ENCODE measurements at regions of chr19 and their contacts with region 1.

Region 1: DNA sequence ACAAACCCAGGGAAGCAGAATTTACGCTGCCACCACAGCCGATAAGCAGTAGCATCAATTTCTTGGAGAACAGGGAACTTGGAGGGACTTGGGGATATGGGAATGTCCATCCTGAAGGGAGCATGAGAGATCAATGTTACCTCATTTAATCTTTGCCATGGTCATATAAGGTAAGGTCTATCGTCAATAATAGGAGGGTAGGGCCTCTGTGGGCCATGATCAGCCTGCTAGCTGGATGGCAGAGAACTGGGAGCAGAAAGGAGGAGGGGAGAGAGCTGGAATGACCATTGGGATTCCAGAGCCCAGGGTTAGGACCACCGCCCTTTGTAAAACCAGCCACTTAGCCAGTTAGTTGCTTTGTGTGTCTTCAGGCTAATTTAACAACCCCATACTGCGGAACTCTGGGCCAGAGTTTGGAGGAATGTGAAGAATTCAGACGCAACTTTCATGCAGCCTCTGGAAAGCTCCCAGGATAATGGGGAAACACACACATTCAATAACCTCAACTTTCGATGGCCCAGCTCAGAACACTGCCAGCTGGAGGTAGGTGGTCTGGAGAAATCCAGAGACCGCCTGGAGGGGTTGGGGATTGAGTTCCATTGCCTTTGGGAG is 40.3 kb downstream of the ZNF557 start:
- DNase-seq: no peak
- ATAC-seq: no peak
- H3K4me3 ChIP-seq: no peak overlapping the region
- H3K27ac ChIP-seq: no peak overlapping the region
- H3K4me1 ChIP-seq: no peaks in the 10 kb centered on the region
- H3K27me3 ChIP-seq: no peaks in the 10 kb centered on the region; the same call in 1 of the 2 replicates
- CTCF ChIP-seq: no peak

Region 2: GRCh38 chr19:7074705-7075282 is 35.0 kb before region 1 on chr19:
- CTCF ChIA-PET with region 1: interaction called, 19 read pairs
- POLR2A ChIA-PET with region 1: no interaction called
- intact Hi-C with region 1: no loop called
- DNase-seq: no peak
- ATAC-seq: no peak
- H3K4me3 ChIP-seq: no peak overlapping the region
- H3K27ac ChIP-seq: no peak overlapping the region
- H3K4me1 ChIP-seq: peaks cover 6% of the 10 kb centered on the region; the same call in 1 of the 2 replicates
- H3K27me3 ChIP-seq: no peaks in the 10 kb centered on the region
- CTCF ChIP-seq: no peak